HCT116 (cell line): ENCODE measurements at regions of chr7 and their contacts with region 1.

Region 1: DNA sequence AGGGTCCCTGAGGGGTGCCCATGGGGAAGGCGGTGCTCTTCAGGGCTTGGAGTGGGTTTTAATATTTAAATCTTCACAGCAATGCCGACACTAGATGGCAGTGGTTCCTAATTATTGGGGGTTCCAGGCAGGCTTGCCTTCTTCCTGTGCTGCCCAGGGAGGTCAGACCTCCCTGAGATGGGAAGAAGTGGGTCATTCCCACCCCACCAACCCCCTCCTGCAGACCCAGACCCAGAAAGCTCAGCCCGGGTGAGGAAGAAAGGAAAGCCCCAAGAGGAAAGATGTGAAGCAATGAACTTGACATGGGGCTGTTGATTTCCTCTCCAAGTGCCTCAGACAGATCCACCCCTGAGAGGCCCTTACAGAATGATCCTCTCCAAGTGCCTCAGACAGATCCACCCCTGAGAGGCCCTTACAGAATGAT is 85.1 kb upstream of the LANCL2 start:
- DNase-seq: peak; percentile 59
- ATAC-seq: peak; percentile 97
- H3K4me3 ChIP-seq: no peak overlapping the region
- H3K27ac ChIP-seq: no peak overlapping the region
- H3K4me1 ChIP-seq: no peaks in the 10 kb centered on the region
- H3K27me3 ChIP-seq: no peaks in the 10 kb centered on the region
- CTCF ChIP-seq: peak; percentile 46 to 71 (median 66); a peak in 4 of 6 replicates
- POLR2A ChIP-seq: no peak
- RAD21 ChIP-seq: peak; percentile 91

Region 2: DNA sequence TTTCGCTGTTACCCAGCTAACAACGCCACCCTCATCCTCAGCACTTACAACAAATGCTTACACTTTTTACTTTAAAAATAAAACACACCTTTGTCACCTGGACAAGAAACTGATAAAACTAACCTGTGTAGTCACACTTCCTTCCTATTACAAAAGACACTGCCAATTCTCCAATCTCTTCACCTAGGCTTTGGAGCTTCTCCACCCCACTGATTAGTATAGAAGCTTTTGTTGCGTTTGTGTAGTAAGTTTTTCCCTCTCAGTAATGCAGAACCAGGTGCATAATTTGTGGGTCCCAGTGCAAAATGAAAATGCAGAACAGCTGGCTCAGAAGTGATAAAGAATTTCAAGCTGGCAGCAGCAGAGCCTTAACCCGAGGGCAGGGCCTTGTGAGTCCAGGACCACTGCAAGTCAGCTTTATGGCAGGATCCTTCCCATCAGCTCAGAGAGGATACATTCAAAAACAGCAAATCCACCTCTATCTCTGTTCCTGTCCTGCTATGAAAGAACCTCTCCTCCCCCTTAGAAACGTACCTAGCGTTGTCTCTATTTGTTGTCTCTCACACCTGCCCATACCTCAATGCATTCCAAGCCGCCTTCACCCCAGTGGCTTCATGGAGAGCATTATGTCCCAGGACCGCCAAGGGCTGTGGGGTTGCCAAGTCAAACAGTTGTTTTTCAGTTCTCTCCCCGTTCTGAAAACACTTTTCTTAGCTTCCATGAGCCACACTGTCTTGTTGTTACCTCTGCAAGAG is 301.5 kb before region 1 on chr7:
- CTCF ChIA-PET with region 1: no interaction called
- POLR2A ChIA-PET with region 1: no interaction called
- RAD21 ChIA-PET with region 1: no interaction called
- intact Hi-C with region 1: no loop called
- DNase-seq: no peak
- ATAC-seq: no peak
- H3K4me3 ChIP-seq: no peak overlapping the region
- H3K27ac ChIP-seq: no peak overlapping the region
- H3K4me1 ChIP-seq: no peaks in the 10 kb centered on the region
- H3K27me3 ChIP-seq: no peaks in the 10 kb centered on the region
- CTCF ChIP-seq: no peak
- POLR2A ChIP-seq: no peak
- RAD21 ChIP-seq: no peak

Region 3: GRCh38 chr7:55164527-55164926 is 115.5 kb before region 1 on chr7:
- CTCF ChIA-PET with region 1: no interaction called
- POLR2A ChIA-PET with region 1: no interaction called
- RAD21 ChIA-PET with region 1: no interaction called
- intact Hi-C with region 1: no loop called
- DNase-seq: no peak
- ATAC-seq: no peak
- H3K4me3 ChIP-seq: no peak overlapping the region
- H3K27ac ChIP-seq: no peak overlapping the region
- H3K4me1 ChIP-seq: no peaks in the 10 kb centered on the region
- H3K27me3 ChIP-seq: no peaks in the 10 kb centered on the region
- CTCF ChIP-seq: no peak
- POLR2A ChIP-seq: no peak
- RAD21 ChIP-seq: no peak

Region 4: DNA sequence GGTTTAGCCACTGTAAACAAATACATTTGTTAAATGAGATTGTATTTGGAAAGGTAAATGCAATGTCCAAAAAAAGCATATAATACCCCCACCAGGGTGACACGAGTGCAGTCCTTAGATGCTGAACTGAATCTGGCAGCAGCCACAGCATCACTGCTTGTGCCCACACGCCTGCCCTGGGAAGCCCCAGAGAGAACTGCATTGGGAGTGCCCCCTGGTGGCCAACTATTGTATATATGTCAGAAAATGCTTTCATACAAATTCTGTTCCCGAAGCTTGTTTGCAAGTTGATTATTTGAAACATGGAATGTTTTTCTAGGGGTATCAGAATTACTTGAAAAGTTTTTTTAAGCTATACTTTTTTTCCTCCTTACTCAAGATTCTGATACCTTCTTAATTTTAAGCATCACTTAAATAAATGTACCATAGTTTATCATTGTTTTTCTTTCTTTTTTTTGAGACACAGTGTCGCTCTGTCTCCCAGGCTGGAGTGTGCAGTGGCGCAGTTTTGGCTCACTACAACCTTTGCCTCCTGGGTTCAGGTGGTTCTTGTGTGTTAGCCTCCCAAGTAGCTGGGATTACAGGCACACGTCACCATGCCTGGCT is 135.2 kb after region 1 on chr7:
- CTCF ChIA-PET with region 1: interaction called, 24 read pairs
- POLR2A ChIA-PET with region 1: no interaction called
- RAD21 ChIA-PET with region 1: no interaction called
- intact Hi-C with region 1: loop called (anchors 1 kb)
- DNase-seq: peak; percentile 43
- ATAC-seq: peak; percentile 95
- H3K4me3 ChIP-seq: no peak overlapping the region
- H3K27ac ChIP-seq: no peak overlapping the region
- H3K4me1 ChIP-seq: no peaks in the 10 kb centered on the region
- H3K27me3 ChIP-seq: no peaks in the 10 kb centered on the region
- CTCF ChIP-seq: peak; percentile 62 to 84 (median 65)
- POLR2A ChIP-seq: no peak
- RAD21 ChIP-seq: peak; percentile 66

Region 5: GRCh38 chr7:55593515-55594318 is 313.7 kb after region 1 on chr7:
- CTCF ChIA-PET with region 1: interaction called, 3 read pairs
- POLR2A ChIA-PET with region 1: no interaction called
- RAD21 ChIA-PET with region 1: no interaction called
- intact Hi-C with region 1: loop called (anchors 2 kb)
- DNase-seq: peak; percentile 54
- ATAC-seq: peak; percentile 91
- H3K4me3 ChIP-seq: peak overlapping the region in 1 of 2 experiments; percentile 23; a peak in 1 of 4 replicates
- H3K27ac ChIP-seq: no peak overlapping the region
- H3K4me1 ChIP-seq: peaks cover 5 to 14% of the 10 kb centered on the region in 2 experiments
- H3K27me3 ChIP-seq: no peaks in the 10 kb centered on the region
- CTCF ChIP-seq: peak; percentile 62 to 94 (median 93); a peak in 5 of 6 replicates
- POLR2A ChIP-seq: no peak
- RAD21 ChIP-seq: peak; percentile 75

Region 6: GRCh38 chr7:55723621-55723941 is 443.5 kb after region 1 on chr7:
- CTCF ChIA-PET with region 1: no interaction called
- POLR2A ChIA-PET with region 1: no interaction called
- RAD21 ChIA-PET with region 1: no interaction called
- intact Hi-C with region 1: loop called (anchors 5 kb)
- DNase-seq: no peak
- ATAC-seq: no peak
- H3K4me3 ChIP-seq: no peak overlapping the region
- H3K27ac ChIP-seq: no peak overlapping the region
- H3K4me1 ChIP-seq: no peaks in the 10 kb centered on the region
- H3K27me3 ChIP-seq: no peaks in the 10 kb centered on the region
- CTCF ChIP-seq: no peak
- POLR2A ChIP-seq: no peak
- RAD21 ChIP-seq: no peak

Region 7: DNA sequence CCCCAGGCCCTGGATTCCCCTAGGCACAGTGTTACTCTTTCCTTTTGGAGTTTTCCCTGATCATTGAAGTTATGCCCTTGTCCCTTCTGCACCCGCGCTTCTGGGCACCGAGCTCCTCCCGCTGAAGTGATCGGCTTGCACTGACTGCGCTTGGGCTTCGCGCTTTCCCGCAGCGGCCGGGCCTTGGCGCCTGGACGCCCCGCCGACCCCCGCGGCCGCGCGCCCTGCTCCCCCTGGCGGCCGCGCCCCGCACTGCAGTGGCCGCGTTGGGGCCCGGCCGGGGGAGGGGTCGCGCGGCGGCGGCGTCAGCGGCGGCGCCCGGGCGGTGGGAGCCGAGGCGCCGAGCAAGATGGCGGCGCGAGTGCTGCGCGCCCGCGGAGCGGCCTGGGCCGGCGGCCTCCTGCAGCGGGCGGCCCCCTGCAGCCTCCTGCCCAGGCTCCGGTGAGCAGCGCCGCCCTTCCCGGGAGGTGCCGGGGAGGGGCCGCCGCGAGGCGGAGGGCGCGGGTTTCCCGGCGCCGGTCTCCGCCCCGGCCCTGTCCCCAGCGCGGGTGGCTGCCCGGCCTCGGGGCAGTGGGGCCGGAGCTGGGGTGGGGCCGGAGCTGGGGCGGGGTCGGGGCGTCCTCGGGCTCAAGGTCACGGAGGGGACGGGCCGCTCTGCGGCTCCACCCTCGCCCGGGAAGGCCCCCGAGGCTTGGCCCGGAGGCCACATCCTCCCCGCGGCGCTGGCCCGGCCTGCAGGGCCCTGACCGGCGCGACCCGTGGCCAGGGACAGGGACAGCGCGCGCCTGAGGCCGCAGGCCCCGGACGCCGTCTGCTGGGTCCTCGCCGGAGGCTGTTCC is 684.4 kb after region 1 on chr7 and contains the start of gene NIPSNAP2:
- CTCF ChIA-PET with region 1: no interaction called
- POLR2A ChIA-PET with region 1: no interaction called
- RAD21 ChIA-PET with region 1: no interaction called
- intact Hi-C with region 1: loop called (anchors 5 kb)
- DNase-seq: peak; percentile 15
- ATAC-seq: peak; percentile 88
- H3K4me3 ChIP-seq: peak within 1 kb of the TSS; percentile 81 to 90
- H3K27ac ChIP-seq: peak within 1 kb of the TSS; percentile 63
- H3K4me1 ChIP-seq: peaks cover 9 to 18% of the 10 kb centered on the region in 2 experiments
- H3K27me3 ChIP-seq: no peaks in the 10 kb centered on the region
- CTCF ChIP-seq: peak in 2 of 3 experiments; percentile 19 to 31; a peak in 2 of 6 replicates
- POLR2A ChIP-seq: no peak
- RAD21 ChIP-seq: peak; percentile 33
- total RNA-seq, gene NIPSNAP2: 62.4 TPM